Endothelial cell of umbilical vein (primary cell): ENCODE measurements at regions of chr14 and their contacts with region 1.

Region 1: DNA sequence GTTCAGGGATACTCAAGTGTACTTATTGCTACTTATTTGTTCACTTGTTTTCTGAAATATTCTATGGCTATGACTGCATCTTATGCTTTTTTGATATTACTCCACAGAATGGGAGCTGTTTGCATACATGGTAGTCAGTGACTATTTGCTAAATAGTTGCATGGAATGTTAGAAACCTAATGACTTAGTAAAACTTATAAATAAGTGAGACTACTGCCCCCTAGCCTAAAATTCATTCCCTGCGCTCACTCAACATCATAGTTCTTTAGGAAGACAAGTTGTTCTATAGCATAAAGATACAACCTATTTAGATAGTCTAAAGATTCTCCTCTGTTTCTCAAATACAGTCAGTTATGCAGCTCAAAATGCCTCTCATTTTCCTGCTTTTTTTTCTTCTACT is 305.5 kb downstream of the CEP128 start:
- DNase-seq: no peak
- H3K4me3 ChIP-seq: no peak overlapping the region
- H3K27ac ChIP-seq: no peak overlapping the region
- H3K4me1 ChIP-seq: peaks cover 38% of the 10 kb centered on the region
- H3K27me3 ChIP-seq: no peaks in the 10 kb centered on the region
- CTCF ChIP-seq: peak in 1 of 2 donors; percentile 11
- POLR2A ChIP-seq: no peak

Region 2: GRCh38 chr14:78974691-78975090 is 1661.4 kb before region 1 on chr14:
- CTCF ChIA-PET with region 1: no interaction called
- POLR2A ChIA-PET with region 1: no interaction called
- dilution Hi-C with region 1: no loop called
- intact Hi-C with region 1: loop called (anchors 2 kb)
- DNase-seq: peak; percentile 88
- H3K4me3 ChIP-seq: no peak overlapping the region
- H3K27ac ChIP-seq: peak overlapping the region; percentile 84
- H3K4me1 ChIP-seq: peaks cover 25% of the 10 kb centered on the region
- H3K27me3 ChIP-seq: no peaks in the 10 kb centered on the region
- CTCF ChIP-seq: no peak
- POLR2A ChIP-seq: no peak

Region 3: GRCh38 chr14:79638672-79639266 is 997.3 kb before region 1 on chr14:
- CTCF ChIA-PET with region 1: no interaction called
- POLR2A ChIA-PET with region 1: no interaction called
- dilution Hi-C with region 1: no loop called
- intact Hi-C with region 1: no loop called
- DNase-seq: no peak
- H3K4me3 ChIP-seq: no peak overlapping the region
- H3K27ac ChIP-seq: no peak overlapping the region
- H3K4me1 ChIP-seq: no peaks in the 10 kb centered on the region
- H3K27me3 ChIP-seq: no peaks in the 10 kb centered on the region
- CTCF ChIP-seq: no peak
- POLR2A ChIP-seq: no peak

Region 4: GRCh38 chr14:80456209-80456608 is 179.9 kb before region 1 on chr14:
- CTCF ChIA-PET with region 1: no interaction called
- POLR2A ChIA-PET with region 1: no interaction called
- dilution Hi-C with region 1: no loop called
- intact Hi-C with region 1: no loop called
- DNase-seq: no peak
- H3K4me3 ChIP-seq: no peak overlapping the region
- H3K27ac ChIP-seq: no peak overlapping the region
- H3K4me1 ChIP-seq: no peaks in the 10 kb centered on the region
- H3K27me3 ChIP-seq: no peaks in the 10 kb centered on the region
- CTCF ChIP-seq: no peak
- POLR2A ChIP-seq: no peak

Region 5: GRCh38 chr14:80567996-80568431 is 68.1 kb before region 1 on chr14:
- CTCF ChIA-PET with region 1: no interaction called
- POLR2A ChIA-PET with region 1: no interaction called
- dilution Hi-C with region 1: no loop called
- intact Hi-C with region 1: no loop called
- DNase-seq: no peak
- H3K4me3 ChIP-seq: no peak overlapping the region
- H3K27ac ChIP-seq: no peak overlapping the region
- H3K4me1 ChIP-seq: no peaks in the 10 kb centered on the region
- H3K27me3 ChIP-seq: no peaks in the 10 kb centered on the region
- CTCF ChIP-seq: no peak
- POLR2A ChIP-seq: no peak

Region 6: GRCh38 chr14:80621701-80622100 is 14.4 kb before region 1 on chr14:
- CTCF ChIA-PET with region 1: interaction called, 3 read pairs
- POLR2A ChIA-PET with region 1: no interaction called
- dilution Hi-C with region 1: no loop called
- intact Hi-C with region 1: loop called (anchors 1 kb)
- DNase-seq: peak; percentile 71
- H3K4me3 ChIP-seq: no peak overlapping the region
- H3K27ac ChIP-seq: no peak overlapping the region
- H3K4me1 ChIP-seq: peaks cover 6% of the 10 kb centered on the region
- H3K27me3 ChIP-seq: no peaks in the 10 kb centered on the region
- CTCF ChIP-seq: no peak
- POLR2A ChIP-seq: no peak

Region 7: GRCh38 chr14:80695869-80696268 is 59.8 kb after region 1 on chr14:
- CTCF ChIA-PET with region 1: no interaction called
- POLR2A ChIA-PET with region 1: no interaction called
- dilution Hi-C with region 1: no loop called
- intact Hi-C with region 1: no loop called
- DNase-seq: no peak
- H3K4me3 ChIP-seq: no peak overlapping the region
- H3K27ac ChIP-seq: no peak overlapping the region
- H3K4me1 ChIP-seq: no peaks in the 10 kb centered on the region
- H3K27me3 ChIP-seq: no peaks in the 10 kb centered on the region
- CTCF ChIP-seq: no peak
- POLR2A ChIP-seq: no peak

Region 8: GRCh38 chr14:80770114-80770908 is 134.2 kb after region 1 on chr14:
- CTCF ChIA-PET with region 1: no interaction called
- POLR2A ChIA-PET with region 1: no interaction called
- dilution Hi-C with region 1: no loop called
- intact Hi-C with region 1: loop called (anchors 2 kb)
- DNase-seq: peak; percentile 70
- H3K4me3 ChIP-seq: no peak overlapping the region
- H3K27ac ChIP-seq: peak overlapping the region; percentile 30
- H3K4me1 ChIP-seq: peaks cover 15% of the 10 kb centered on the region
- H3K27me3 ChIP-seq: no peaks in the 10 kb centered on the region
- CTCF ChIP-seq: no peak
- POLR2A ChIP-seq: no peak